Activated CD8-positive, alpha-beta T cell treated with anti-CD3 and anti-CD28 coated beads for 36 hours (primary cell): ENCODE measurements at regions of chr10 and their contacts with region 1.

Region 1: DNA sequence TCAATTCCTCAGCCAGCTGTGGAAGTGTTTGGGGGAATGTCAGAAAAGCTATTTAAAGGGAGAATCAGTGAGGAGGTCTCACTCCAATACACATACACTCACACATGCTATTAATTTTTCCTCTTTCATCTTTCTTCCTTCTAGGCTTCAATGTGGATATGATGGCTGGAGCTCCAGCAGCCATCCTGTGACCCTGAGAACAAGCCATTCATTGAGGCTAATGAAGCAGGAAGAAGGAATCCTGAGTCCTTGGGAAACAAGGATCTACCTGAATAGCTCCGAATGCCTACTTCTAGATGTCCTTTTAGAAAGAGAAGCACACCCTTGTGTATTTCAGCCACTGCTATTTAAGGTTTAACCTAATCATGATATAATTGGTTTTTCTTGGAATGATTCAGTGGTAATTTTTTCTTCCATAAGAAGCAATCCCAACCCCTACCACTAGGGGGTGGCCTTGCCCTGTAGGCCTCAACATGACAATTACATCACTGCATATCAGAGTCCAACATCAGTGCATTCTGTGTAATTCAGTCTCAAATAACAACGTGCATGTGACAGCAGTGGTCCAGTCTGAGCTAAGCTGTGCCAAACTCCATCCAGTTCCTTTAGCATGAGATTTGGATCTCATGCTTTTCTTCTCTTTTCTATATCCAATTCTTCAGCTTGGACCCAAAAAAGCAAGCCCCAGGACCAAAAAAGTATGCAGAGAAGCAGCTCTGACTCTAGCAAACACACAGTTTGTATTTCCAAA is 85.3 kb upstream of the ANKRD1 start:
- DNase-seq: peak; percentile 81
- ATAC-seq: peak; percentile 81
- H3K4me3 Mint-ChIP-seq: no peak overlapping the region
- H3K27ac Mint-ChIP-seq: peak overlapping the region; percentile 76
- H3K4me1 Mint-ChIP-seq: peaks cover 41% of the 10 kb centered on the region
- H3K27me3 Mint-ChIP-seq: peaks cover 4% of the 10 kb centered on the region
- CTCF ChIP-seq: peak; percentile 93

Region 2: GRCh38 chr10:90879062-90879461 is 127.1 kb before region 1 on chr10:
- CTCF ChIA-PET with region 1: interaction called, 16 read pairs
- POLR2A ChIA-PET with region 1: no interaction called
- intact Hi-C with region 1: no loop called
- DNase-seq: no peak
- ATAC-seq: no peak
- H3K4me3 Mint-ChIP-seq: no peak overlapping the region
- H3K27ac Mint-ChIP-seq: no peak overlapping the region
- H3K4me1 Mint-ChIP-seq: peaks cover 6% of the 10 kb centered on the region
- H3K27me3 Mint-ChIP-seq: no peaks in the 10 kb centered on the region
- CTCF ChIP-seq: no peak

Region 3: DNA sequence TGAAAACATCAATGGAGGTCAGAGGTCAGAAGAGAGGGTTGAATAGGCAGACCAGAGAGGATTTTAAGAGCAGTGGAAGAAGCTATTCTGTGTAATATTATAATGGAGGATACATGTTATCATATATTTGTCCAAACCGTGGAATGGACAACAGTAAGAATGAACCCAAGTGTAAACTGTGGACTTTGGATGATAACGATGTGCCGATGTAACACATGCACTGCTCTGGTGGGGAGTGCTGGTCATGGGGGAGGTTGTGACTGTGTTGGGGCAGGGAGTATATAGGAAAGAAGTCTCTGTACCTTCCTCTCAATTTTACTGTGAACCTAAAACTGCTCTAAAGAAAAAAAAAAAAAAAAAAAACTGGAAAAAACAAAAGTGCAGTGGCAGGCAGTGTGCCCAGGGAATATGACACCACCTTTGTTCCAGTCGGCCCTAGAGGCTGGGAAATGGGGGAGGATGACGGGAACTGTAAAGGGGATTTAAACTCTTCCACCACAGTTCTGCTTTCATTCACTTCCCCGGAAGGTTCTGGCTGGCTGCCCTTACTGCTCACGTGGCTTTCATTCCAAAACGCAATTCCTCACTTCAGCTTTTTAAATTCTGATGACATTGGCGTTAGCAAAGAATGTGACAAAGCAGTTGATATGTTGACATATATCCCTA is 28.5 kb after region 1 on chr10:
- CTCF ChIA-PET with region 1: interaction called, 22 read pairs
- POLR2A ChIA-PET with region 1: interaction called, 3 read pairs
- intact Hi-C with region 1: no loop called
- DNase-seq: no peak
- ATAC-seq: no peak
- H3K4me3 Mint-ChIP-seq: no peak overlapping the region
- H3K27ac Mint-ChIP-seq: peak overlapping the region; percentile 90
- H3K4me1 Mint-ChIP-seq: peaks cover 18% of the 10 kb centered on the region
- H3K27me3 Mint-ChIP-seq: no peaks in the 10 kb centered on the region
- CTCF ChIP-seq: no peak

Region 4: GRCh38 chr10:91153508-91153907 is 147.3 kb after region 1 on chr10:
- CTCF ChIA-PET with region 1: interaction called, 11 read pairs
- POLR2A ChIA-PET with region 1: no interaction called
- intact Hi-C with region 1: no loop called
- DNase-seq: no peak
- ATAC-seq: no peak
- H3K4me3 Mint-ChIP-seq: no peak overlapping the region
- H3K27ac Mint-ChIP-seq: no peak overlapping the region
- H3K4me1 Mint-ChIP-seq: no peaks in the 10 kb centered on the region
- H3K27me3 Mint-ChIP-seq: no peaks in the 10 kb centered on the region
- CTCF ChIP-seq: no peak

Region 5: DNA sequence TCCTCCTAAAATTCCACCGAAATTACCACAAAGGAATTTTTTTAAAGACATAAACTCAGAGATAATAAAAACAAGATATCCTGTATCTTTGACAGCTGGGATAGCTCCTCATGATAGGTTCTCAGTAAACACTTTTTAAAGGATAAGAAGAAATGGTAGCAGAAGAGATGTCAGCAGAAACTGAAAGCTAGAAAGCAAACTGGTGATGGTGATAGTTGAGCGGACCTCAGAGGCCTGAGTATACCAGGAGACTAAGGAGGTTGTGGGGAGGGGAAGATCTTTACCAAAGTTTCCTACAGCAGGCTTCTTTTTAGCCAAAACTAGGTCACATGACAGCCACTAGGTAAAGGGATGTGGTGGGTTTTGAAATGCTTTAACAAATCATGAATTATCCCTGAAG is 236.8 kb after region 1 on chr10:
- CTCF ChIA-PET with region 1: interaction called, 184 read pairs
- POLR2A ChIA-PET with region 1: no interaction called
- intact Hi-C with region 1: no loop called
- DNase-seq: peak; percentile 11
- ATAC-seq: peak; percentile 65
- H3K4me3 Mint-ChIP-seq: no peak overlapping the region
- H3K27ac Mint-ChIP-seq: peak overlapping the region; percentile 44
- H3K4me1 Mint-ChIP-seq: peaks cover 17% of the 10 kb centered on the region
- H3K27me3 Mint-ChIP-seq: no peaks in the 10 kb centered on the region
- CTCF ChIP-seq: no peak

Region 6: DNA sequence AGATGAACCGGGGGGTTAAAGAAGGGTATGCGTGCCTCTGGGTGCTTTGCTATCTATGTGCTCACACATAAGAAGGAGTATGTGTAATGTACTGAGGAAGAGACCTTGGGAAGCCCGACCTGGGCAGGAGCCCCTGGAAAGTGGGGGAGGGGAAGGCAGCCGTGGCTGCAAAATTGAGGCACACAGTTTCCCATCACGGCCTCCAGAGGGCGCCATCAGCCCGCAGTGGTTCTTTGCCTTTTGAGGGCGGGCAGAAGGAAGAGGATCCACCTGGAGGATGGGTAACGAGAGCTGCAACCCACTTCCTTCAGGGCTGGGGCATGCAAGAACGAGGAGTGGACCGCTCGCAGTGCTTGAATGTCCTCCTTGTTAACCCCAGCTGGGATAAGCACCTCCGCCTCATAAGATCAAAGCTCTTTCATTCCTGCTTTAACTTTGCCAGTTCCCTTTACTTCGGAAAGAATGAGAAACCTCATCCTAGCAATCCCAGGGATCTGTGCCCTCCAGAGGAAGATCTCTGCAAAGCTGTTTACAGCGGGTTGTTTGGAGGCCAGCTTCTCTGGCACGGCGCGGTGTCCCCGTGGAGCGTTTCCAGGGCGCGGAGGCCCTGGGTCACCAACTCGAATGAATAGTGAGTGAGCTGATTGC is 292.2 kb after region 1 on chr10:
- CTCF ChIA-PET with region 1: interaction called, 37 read pairs
- POLR2A ChIA-PET with region 1: no interaction called
- intact Hi-C with region 1: no loop called
- DNase-seq: peak; percentile 86
- ATAC-seq: peak; percentile 95
- H3K4me3 Mint-ChIP-seq: peak overlapping the region; percentile 59
- H3K27ac Mint-ChIP-seq: no peak overlapping the region
- H3K4me1 Mint-ChIP-seq: peaks cover 9% of the 10 kb centered on the region
- H3K27me3 Mint-ChIP-seq: peaks cover 9% of the 10 kb centered on the region
- CTCF ChIP-seq: peak; percentile 92

Region 7: GRCh38 chr10:91444211-91445182 is 438.3 kb after region 1 on chr10:
- CTCF ChIA-PET with region 1: no interaction called
- POLR2A ChIA-PET with region 1: no interaction called
- intact Hi-C with region 1: no loop called
- DNase-seq: no peak
- ATAC-seq: no peak
- H3K4me3 Mint-ChIP-seq: no peak overlapping the region
- H3K27ac Mint-ChIP-seq: no peak overlapping the region
- H3K4me1 Mint-ChIP-seq: no peaks in the 10 kb centered on the region
- H3K27me3 Mint-ChIP-seq: no peaks in the 10 kb centered on the region
- CTCF ChIP-seq: no peak